Heart right ventricle (tissue), 16 donors: ENCODE measurements at regions of chr11 and their contacts with region 1.

Region 1: GRCh38 chr11:5808500-5809121 is at the start of gene OR52N2:
- DNase-seq: peak; percentile 35 to 78
- ATAC-seq: peak; percentile 81 to 97 (median 94)
- H3K4me3 ChIP-seq: peak within 1 kb of the TSS; percentile 13 to 66 (median 54)
- H3K27ac ChIP-seq: peak within 1 kb of the TSS in 2 of 10 donors; percentile 19 to 50
- H3K4me1 ChIP-seq: peaks cover 0 to 16% (median 5%) of the 10 kb centered on the region in 9 donors
- H3K27me3 ChIP-seq: peaks cover 0 to 6% (median 0%) of the 10 kb centered on the region in 7 donors
- CTCF ChIP-seq: peak; percentile 71 to 92 (median 84)
- total RNA-seq, gene OR52N2: not detected

Region 2: DNA sequence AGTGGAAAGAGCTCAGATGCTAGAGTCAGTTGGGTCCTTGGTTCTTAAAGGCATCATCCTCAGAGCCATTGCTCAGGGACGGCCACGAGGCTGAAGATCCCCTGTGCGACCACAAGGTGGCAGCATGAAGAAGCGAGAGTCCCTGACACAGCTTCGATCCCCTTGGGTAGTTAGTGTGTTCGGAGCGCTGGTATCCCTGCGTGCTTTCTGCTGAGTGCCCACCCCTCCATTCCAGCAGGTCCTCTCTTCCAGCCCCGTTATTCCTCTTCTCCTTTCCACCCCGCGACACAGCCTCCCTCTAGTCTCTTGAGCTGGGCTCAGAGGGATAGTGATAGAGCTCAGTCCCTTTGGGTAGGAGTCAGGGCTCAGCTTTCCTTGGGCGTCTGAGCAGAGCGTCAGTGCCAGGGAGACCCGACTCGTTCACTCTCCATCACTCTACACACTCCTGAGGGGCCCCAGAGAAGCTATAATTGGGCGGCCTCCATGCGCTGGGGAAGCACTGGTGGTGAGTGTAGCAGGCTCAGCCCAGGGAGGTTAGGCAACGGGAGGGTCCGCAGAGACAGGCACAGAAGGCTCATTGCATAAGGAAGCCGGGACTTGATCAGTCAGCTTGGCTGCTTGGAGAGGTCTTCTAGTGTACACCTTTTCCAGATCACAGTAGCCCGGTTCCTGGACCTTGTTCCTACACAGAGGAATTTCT is 1171.5 kb before region 1 on chr11 and contains the start of gene OR51D1:
- intact Hi-C with region 1: loop called in 1 of 10 experiments (anchors 5 kb)
- DNase-seq: peak; percentile 74 to 77
- ATAC-seq: peak; percentile 92 to 97 (median 95)
- H3K4me3 ChIP-seq: peak within 1 kb of the TSS in 9 of 10 donors; percentile 12 to 47 (median 31)
- H3K27ac ChIP-seq: peak within 1 kb of the TSS in 3 of 10 donors; percentile 34 to 48 (median 46)
- H3K4me1 ChIP-seq: peaks cover 0 to 26% (median 4%) of the 10 kb centered on the region in 9 donors
- H3K27me3 ChIP-seq: peaks cover 0 to 4% (median 0%) of the 10 kb centered on the region in 7 donors
- CTCF ChIP-seq: peak; percentile 84 to 94 (median 92)
- total RNA-seq, gene OR51D1: not detected

Region 3: DNA sequence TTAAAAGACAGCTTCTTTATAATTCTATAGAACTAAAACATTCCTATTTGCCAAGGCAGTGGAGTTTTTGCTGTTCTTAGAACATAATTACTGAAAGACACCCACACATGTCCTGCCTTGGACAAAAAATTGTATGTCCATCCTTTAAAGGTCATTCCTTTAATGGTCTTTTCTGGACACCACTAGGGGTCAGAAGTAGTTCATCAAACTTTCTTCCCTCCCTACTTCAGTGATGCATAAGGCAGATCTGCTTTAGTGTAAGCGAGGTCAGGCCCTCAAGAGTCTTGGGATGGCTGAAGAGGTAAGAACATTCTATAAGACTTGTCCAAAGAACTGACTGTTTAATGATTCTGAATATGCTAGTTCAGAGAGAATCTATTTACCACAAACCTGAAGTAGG is 603.8 kb before region 1 on chr11:
- intact Hi-C with region 1: loop called in 1 of 10 experiments (anchors 10 kb)
- DNase-seq: no peak
- ATAC-seq: peak in 1 of 8 donors; percentile 70
- H3K4me3 ChIP-seq: no peak overlapping the region
- H3K27ac ChIP-seq: no peak overlapping the region
- H3K4me1 ChIP-seq: no peaks in the 10 kb centered on the region
- H3K27me3 ChIP-seq: peaks cover 0 to 21% (median 0%) of the 10 kb centered on the region in 7 donors
- CTCF ChIP-seq: peak in 7 of 9 donors; percentile 18 to 60 (median 47)

Region 4: GRCh38 chr11:5489576-5490357 is 318.8 kb before region 1 on chr11:
- intact Hi-C with region 1: loop called in 1 of 10 experiments (anchors 5 kb)
- DNase-seq: no peak
- ATAC-seq: no peak
- H3K4me3 ChIP-seq: no peak overlapping the region
- H3K27ac ChIP-seq: no peak overlapping the region
- H3K4me1 ChIP-seq: no peaks in the 10 kb centered on the region
- H3K27me3 ChIP-seq: peaks cover 0 to 5% (median 0%) of the 10 kb centered on the region in 7 donors
- CTCF ChIP-seq: no peak

Region 5: DNA sequence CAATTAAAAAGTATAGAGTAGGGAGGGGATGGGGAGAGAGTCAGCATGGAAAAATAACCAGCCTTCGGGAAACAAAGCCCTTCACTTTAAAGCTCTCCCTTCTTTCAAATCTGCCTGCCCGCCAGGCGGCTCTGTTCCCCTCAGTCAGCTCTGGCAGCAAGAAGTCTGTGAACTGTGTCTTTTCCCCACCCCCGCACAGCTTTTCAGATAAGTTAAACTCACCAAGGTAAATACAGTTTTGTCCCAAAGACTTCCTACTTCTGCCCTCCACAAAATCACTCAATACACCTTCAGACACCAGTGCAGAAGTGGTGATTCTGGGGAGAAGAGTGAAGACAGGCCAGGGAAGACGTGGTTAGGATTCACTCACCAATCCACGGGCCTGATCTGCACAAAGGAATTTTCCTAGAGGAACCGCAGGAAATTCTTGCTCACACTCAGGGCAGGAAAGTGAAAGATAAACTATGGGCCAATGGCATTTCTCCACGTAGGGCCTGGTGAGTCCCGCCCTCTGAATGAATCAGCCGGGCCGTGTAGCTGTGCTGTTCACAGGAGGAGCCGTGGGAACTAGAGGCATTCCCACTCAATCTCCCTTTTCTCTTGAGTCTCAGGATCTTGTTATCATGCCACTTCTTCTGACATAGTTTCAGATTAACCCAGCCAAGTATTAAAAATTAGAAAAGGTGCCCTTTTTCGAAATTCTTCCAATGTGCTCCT is 123.8 kb before region 1 on chr11 and contains the start of gene TRIM5:
- intact Hi-C with region 1: loop called in 3 of 10 experiments (anchors 5 to 10 kb)
- DNase-seq: peak; percentile 76 to 93
- ATAC-seq: peak; percentile 97 to 99 (median 98)
- H3K4me3 ChIP-seq: peak within 1 kb of the TSS; percentile 0 to 68 (median 54)
- H3K27ac ChIP-seq: peak within 1 kb of the TSS; percentile 59 to 94 (median 86)
- H3K4me1 ChIP-seq: peaks cover 3 to 39% (median 19%) of the 10 kb centered on the region in 9 donors
- H3K27me3 ChIP-seq: no peaks in the 10 kb centered on the region
- CTCF ChIP-seq: peak; percentile 21 to 79 (median 53)
- total RNA-seq, gene TRIM5: 3.1 to 12.6 (median 7.8) TPM